ENCODE measurements at regions of chr15 and their contacts with region 1.

Region 1: GRCh38 chr15:76973362-76973743 is 21.6 kb upstream of the PSTPIP1 start:
- DNase-seq: peak; percentile 84
- ATAC-seq: peak; percentile 97
- H3K4me3 Mint-ChIP-seq: no peak overlapping the region
- H3K27ac Mint-ChIP-seq: no peak overlapping the region
- H3K4me1 Mint-ChIP-seq: peaks cover 4% of the 10 kb centered on the region
- H3K27me3 Mint-ChIP-seq: no peaks in the 10 kb centered on the region
- CTCF ChIP-seq: peak; percentile 67

Region 2: DNA sequence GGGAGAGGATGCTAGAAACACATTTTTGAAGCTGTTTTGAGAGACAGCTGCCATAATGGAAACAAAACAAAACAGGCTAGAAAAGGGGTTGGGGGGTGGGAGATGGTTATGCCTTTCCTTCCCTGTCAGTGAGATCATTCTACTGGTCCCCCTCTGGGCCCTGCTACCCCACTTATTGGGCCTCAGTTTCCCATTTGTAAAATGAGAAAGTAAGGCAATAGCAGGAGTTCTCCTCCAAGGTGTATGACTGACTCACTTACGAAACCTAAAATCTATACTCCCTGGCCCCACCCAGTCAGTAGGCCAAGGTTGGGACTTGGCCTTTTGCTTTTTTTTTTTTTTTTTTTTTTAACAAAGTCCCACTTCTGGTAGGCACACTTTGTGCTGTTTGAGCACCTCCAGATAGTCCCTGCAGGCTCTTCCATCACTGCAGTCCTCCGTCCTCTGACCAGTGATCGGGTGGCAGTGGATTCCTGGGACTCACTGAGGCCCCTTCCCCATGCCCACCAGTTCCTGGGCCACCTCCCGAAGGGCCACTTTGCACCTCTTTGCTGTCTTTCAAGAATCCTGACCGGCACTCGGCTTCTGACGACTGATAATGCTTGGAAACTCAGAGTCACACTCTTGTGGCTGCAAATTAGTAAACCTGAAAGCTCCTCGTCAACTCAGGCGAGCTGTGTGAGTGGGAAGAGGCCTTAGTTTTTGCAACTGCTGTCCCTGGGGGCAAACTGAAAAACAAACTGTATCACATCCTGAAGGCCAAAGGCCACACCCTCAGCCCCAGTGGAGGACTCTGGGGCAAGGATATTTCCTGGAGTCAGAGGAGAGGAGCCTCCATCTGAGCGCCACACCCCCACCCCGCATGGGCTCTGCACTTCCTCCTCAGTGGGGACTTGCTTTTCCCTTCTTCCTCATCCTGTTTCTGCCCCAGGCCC is 14.8 kb after region 1 on chr15:
- CTCF ChIA-PET with region 1: interaction called, 23 read pairs
- POLR2A ChIA-PET with region 1: no interaction called
- DNase-seq: peak; percentile 8
- ATAC-seq: peak; percentile 73
- H3K4me3 Mint-ChIP-seq: no peak overlapping the region
- H3K27ac Mint-ChIP-seq: no peak overlapping the region
- H3K4me1 Mint-ChIP-seq: peaks cover 9% of the 10 kb centered on the region
- H3K27me3 Mint-ChIP-seq: no peaks in the 10 kb centered on the region; the same call in 1 of the 2 replicates
- CTCF ChIP-seq: no peak

Region 3: DNA sequence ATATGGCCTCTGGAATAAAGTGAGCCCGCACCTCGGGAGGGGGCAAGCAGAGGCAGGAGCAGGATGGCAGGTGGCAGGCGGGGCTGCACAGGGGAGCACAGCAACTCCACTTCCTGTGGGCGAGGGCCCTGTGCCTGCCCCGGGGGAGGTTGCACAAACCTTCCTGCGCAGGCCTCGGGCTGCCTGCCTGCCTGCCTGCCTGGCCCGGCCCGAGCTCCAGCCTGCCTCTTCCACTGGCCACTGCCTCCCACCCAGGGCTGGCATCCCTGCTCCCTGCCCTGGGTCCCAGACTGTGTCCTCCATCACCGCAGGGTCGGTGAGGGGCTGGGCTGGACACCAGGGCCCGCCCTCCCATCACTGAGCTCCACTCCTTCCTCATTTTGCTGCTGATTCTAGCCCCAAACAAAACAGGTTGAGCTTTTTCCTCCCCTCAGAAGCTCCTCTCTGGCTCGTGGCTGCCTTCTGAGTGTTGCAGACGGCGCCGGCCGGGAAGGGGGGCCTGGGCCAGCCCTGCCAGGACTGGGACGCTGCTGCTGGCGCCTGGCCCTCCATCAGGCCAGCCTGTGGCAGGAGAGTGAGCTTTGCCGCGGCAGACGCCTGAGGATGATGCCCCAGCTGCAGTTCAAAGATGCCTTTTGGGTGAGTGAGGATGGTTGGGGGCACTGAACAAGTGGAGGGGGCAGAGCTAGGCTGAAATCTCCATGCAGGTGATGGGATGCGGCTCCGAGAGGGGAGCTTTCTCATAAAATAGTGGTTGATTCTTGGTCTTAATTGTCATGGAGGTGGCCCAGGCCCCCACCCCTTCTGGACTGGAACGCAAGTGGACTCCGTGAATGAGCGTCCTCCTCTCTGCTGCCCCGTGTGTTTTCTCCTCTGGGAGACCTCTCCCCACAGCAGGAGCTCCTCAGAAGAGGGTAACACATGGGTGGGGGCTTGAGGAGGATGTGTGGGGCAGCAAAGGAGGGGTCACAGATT is 21.9 kb after region 1 on chr15 and contains the start of gene PSTPIP1:
- CTCF ChIA-PET with region 1: interaction called, 20 read pairs
- POLR2A ChIA-PET with region 1: no interaction called
- DNase-seq: peak; percentile 11
- ATAC-seq: peak; percentile 38
- H3K4me3 Mint-ChIP-seq: no peak within 1 kb of the TSS
- H3K27ac Mint-ChIP-seq: no peak within 1 kb of the TSS
- H3K4me1 Mint-ChIP-seq: no peaks in the 10 kb centered on the region
- H3K27me3 Mint-ChIP-seq: no peaks in the 10 kb centered on the region; the same call in 1 of the 2 replicates
- CTCF ChIP-seq: no peak
- total RNA-seq, gene PSTPIP1: 1.3 to 1.6 TPM (median 1.5 TPM) in 3 replicates

Region 4: GRCh38 chr15:77015646-77016320 is 42.4 kb after region 1 on chr15:
- CTCF ChIA-PET with region 1: interaction called, 41 read pairs
- POLR2A ChIA-PET with region 1: no interaction called
- DNase-seq: no peak
- ATAC-seq: peak; percentile 31
- H3K4me3 Mint-ChIP-seq: no peak overlapping the region
- H3K27ac Mint-ChIP-seq: no peak overlapping the region
- H3K4me1 Mint-ChIP-seq: no peaks in the 10 kb centered on the region
- H3K27me3 Mint-ChIP-seq: no peaks in the 10 kb centered on the region
- CTCF ChIP-seq: no peak

Region 5: GRCh38 chr15:77024271-77025082 is 51.1 kb after region 1 on chr15:
- CTCF ChIA-PET with region 1: interaction called, 41 read pairs
- POLR2A ChIA-PET with region 1: no interaction called
- DNase-seq: peak; percentile 86
- ATAC-seq: peak; percentile 71
- H3K4me3 Mint-ChIP-seq: no peak overlapping the region
- H3K27ac Mint-ChIP-seq: no peak overlapping the region
- H3K4me1 Mint-ChIP-seq: no peaks in the 10 kb centered on the region
- H3K27me3 Mint-ChIP-seq: peaks cover 8% of the 10 kb centered on the region
- CTCF ChIP-seq: peak; percentile 96

Region 6: GRCh38 chr15:77034695-77035489 is 61.5 kb after region 1 on chr15:
- CTCF ChIA-PET with region 1: interaction called, 30 read pairs
- POLR2A ChIA-PET with region 1: interaction called, 3 read pairs
- DNase-seq: peak; percentile 83
- ATAC-seq: peak; percentile 68
- H3K4me3 Mint-ChIP-seq: no peak overlapping the region
- H3K27ac Mint-ChIP-seq: no peak overlapping the region
- H3K4me1 Mint-ChIP-seq: peaks cover 12% of the 10 kb centered on the region
- H3K27me3 Mint-ChIP-seq: peaks cover 3% of the 10 kb centered on the region
- CTCF ChIP-seq: peak; percentile 71

Measured in WTC11 (cell line).